SK-N-SH (cell line): ENCODE measurements at regions of chr2 and their contacts with region 1.

Region 1: GRCh38 chr2:208101716-208102631 is 22.4 kb downstream of the CRYGD start:
- DNase-seq: peak; percentile 62
- H3K4me3 ChIP-seq: no peak overlapping the region; a peak in 1 of 4 replicates
- H3K27ac ChIP-seq: no peak overlapping the region
- H3K4me1 ChIP-seq: peaks cover 0 to 2% of the 10 kb centered on the region in 2 experiments; a peak in 1 of 4 replicates
- H3K27me3 ChIP-seq: no peaks in the 10 kb centered on the region
- CTCF ChIP-seq: peak; percentile 71
- EP300 ChIP-seq: no peak
- RAD21 ChIP-seq: peak; percentile 86

Region 2: DNA sequence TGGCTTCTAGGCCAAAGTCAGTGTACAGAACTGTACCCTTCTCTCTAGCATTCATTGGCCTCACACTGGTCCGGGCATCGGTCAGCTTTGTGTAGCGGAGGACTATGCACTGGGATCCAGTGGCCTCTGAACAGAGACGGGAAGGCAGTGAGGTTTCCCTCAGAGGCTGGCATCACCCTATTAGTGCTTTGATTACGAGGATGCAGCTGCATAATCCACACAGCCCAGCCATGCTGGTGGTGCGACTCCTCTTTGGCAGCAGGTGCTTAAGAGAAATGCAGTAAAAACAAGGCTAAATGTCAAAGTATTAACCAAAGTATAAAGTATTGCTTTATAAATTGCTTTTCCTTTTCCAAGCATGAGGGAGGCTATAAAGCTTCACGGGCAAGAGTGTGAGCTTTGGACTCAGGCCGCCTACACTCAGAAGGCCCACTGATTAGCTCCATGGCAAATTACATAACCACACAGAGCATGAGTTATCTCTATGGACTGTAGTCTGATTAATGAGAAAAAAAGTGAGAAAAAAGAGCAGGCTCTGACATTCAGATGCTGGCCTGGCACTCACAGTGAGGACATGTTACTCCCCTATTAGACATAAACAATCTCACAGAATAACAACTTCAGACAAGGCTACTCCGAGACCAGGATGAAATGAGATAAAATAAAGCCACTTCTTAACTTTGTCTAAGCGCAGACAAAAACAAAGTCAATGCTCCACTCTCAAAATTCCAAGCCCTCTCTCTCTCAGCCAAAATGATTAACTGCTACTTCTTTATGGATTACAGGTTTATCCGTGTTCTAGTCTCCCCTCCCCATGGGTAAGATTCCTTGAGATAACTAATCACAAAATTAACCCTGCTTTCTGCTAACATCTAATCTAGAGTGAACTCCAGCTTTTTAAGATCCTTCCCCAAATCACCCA is 34.1 kb after region 1 on chr2:
- CTCF ChIA-PET with region 1: interaction called, 10 read pairs
- POLR2A ChIA-PET with region 1: no interaction called
- DNase-seq: no peak
- H3K4me3 ChIP-seq: no peak overlapping the region
- H3K27ac ChIP-seq: no peak overlapping the region
- H3K4me1 ChIP-seq: peaks cover 0 to 8% of the 10 kb centered on the region in 2 experiments; a peak in 1 of 4 replicates
- H3K27me3 ChIP-seq: no peaks in the 10 kb centered on the region
- CTCF ChIP-seq: no peak
- EP300 ChIP-seq: no peak
- RAD21 ChIP-seq: no peak

Region 3: GRCh38 chr2:208208335-208209085 is 106.5 kb after region 1 on chr2:
- CTCF ChIA-PET with region 1: no interaction called
- POLR2A ChIA-PET with region 1: no interaction called
- DNase-seq: no peak
- H3K4me3 ChIP-seq: no peak overlapping the region
- H3K27ac ChIP-seq: no peak overlapping the region
- H3K4me1 ChIP-seq: no peaks in the 10 kb centered on the region
- H3K27me3 ChIP-seq: no peaks in the 10 kb centered on the region
- CTCF ChIP-seq: no peak
- EP300 ChIP-seq: no peak
- RAD21 ChIP-seq: no peak

Region 4: DNA sequence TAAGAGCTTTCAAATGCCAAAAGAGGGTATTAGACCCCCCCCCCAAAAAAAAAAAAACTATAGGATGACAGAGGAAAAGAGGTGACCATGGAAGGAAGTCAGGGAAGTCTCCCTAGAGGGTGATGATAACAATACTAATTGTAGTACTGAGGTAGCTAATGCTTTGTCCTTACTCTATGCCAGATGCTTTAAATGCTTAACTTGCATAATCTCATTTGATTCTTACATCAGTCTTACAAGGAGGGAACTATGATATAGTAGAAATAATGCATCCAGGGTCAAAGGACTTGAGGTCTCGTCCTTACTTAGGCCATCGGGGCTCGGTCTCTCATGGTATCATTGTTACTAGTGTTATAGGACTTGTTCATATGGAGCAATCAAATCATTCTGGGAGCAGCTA is 143.8 kb after region 1 on chr2:
- CTCF ChIA-PET with region 1: interaction called, 87 read pairs
- POLR2A ChIA-PET with region 1: no interaction called
- DNase-seq: no peak
- H3K4me3 ChIP-seq: no peak overlapping the region
- H3K27ac ChIP-seq: no peak overlapping the region
- H3K4me1 ChIP-seq: no peaks in the 10 kb centered on the region
- H3K27me3 ChIP-seq: no peaks in the 10 kb centered on the region
- CTCF ChIP-seq: no peak
- EP300 ChIP-seq: no peak
- RAD21 ChIP-seq: no peak

Region 5: GRCh38 chr2:208254871-208255556 is 153.0 kb after region 1 on chr2 and contains the start of gene IDH1:
- CTCF ChIA-PET with region 1: interaction called, 87 read pairs
- POLR2A ChIA-PET with region 1: interaction called, 8 read pairs
- DNase-seq: peak; percentile 98
- H3K4me3 ChIP-seq: peak within 1 kb of the TSS; percentile 52 to 95
- H3K27ac ChIP-seq: peak within 1 kb of the TSS; percentile 74 to 87
- H3K4me1 ChIP-seq: peaks cover 0 to 8% of the 10 kb centered on the region in 2 experiments; a peak in 3 of 4 replicates
- H3K27me3 ChIP-seq: no peaks in the 10 kb centered on the region
- CTCF ChIP-seq: peak; percentile 69
- EP300 ChIP-seq: no peak
- RAD21 ChIP-seq: peak; percentile 60
- polyA plus RNA-seq, gene IDH1: 43.4 and 57.2 TPM in 2 replicates